Adrenal gland (tissue), 19 donors: ENCODE measurements at regions of chr12 and their contacts with region 1.

Region 1: GRCh38 chr12:6638305-6638704 is 2.5 kb upstream of the LPAR5 start:
- DNase-seq: peak in 1 of 7 donors; percentile 30
- H3K4me3 ChIP-seq: no peak overlapping the region
- H3K27ac ChIP-seq: peak overlapping the region in 1 of 5 donors; percentile 56
- H3K4me1 ChIP-seq: no peaks in the 10 kb centered on the region
- H3K27me3 ChIP-seq: no peaks in the 10 kb centered on the region
- CTCF ChIP-seq: no peak
- POLR2A ChIP-seq: no peak

Region 2: GRCh38 chr12:6620137-6620884 is 18.0 kb before region 1 on chr12:
- intact Hi-C with region 1: loop called in 1 of 2 experiments (anchors 2 kb)
- DNase-seq: peak in 2 of 7 donors; percentile 46 to 55
- H3K4me3 ChIP-seq: peak overlapping the region in 1 of 4 donors; percentile 34
- H3K27ac ChIP-seq: no peak overlapping the region
- H3K4me1 ChIP-seq: peaks cover 0 to 9% of the 10 kb centered on the region in 2 donors
- H3K27me3 ChIP-seq: peaks cover 6% of the 10 kb centered on the region
- CTCF ChIP-seq: peak; percentile 17 to 65 (median 50)
- POLR2A ChIP-seq: no peak

Region 3: DNA sequence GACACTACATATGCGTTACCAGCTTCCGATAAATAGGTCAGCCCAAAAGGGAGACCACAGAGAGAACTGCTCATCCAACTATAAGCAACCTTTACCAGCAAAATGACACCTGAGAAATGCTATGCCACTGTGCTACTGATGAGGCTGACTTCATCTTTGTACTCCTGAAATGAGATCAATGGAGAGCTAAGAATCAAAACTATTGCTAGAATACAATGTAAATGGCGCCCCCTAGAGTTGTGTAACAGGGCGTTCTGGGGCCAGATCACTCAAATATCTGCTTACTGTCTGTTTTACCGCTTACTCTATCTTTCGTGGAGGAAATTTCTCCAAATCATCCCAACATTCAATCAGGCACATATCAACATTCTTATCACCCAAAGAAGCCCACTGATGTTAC is 46.3 kb after region 1 on chr12:
- intact Hi-C with region 1: no loop called
- DNase-seq: peak in 2 of 7 donors; percentile 24 to 42
- H3K4me3 ChIP-seq: no peak overlapping the region
- H3K27ac ChIP-seq: peak overlapping the region in 3 of 5 donors; percentile 0 to 9 (median 4)
- H3K4me1 ChIP-seq: peaks cover 23 to 49% of the 10 kb centered on the region in 2 donors
- H3K27me3 ChIP-seq: no peaks in the 10 kb centered on the region
- CTCF ChIP-seq: peak in 5 of 6 experiments; percentile 28 to 48 (median 38)
- POLR2A ChIP-seq: no peak